Naive thymus-derived CD4-positive, alpha-beta T cell (primary cell): ENCODE measurements at regions of chr1 and their contacts with region 1.

Region 1: DNA sequence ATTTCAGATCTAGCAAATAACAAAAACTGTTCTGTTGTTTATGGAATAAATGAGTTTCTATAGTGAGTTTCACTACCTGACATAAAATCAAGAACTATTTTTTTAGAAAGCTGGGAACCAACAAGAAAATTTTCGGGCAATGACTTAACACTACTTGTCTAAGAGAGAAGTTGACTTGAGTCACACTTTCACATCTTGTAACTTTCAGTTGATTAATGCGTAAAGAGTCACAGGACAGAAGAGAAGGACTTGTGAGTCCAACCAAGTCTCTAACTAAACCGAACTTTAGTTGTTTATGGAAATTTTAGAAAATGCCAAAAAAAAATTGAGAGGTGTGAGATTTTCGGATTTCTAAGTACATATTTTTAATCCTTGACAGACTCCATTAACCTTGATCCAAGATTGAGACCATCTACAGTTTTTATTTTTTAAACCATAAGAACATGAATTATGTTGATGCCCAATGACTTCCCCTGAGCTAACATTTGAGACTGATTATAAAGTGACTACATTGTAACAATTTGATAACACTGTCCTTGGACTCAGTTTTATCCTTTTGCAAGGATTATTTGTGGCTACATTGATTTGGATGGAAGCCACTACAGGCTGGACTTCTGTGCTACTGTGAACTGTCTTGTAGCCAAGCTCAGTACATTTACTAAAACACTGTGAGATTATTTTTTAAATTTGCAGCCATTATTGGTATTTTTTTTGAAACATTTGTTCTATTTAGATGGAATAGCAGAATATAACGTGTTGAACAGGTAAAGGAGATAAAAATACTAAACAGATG is 284.0 kb downstream of the PTPRC start:
- DNase-seq: no peak
- ATAC-seq: peak; percentile 68
- H3K4me3 ChIP-seq: no peak overlapping the region
- H3K4me3 Mint-ChIP-seq: peak overlapping the region in 2 of 10 donors; percentile 18 to 68
- H3K27ac ChIP-seq: no peak overlapping the region
- H3K27ac Mint-ChIP-seq: peak overlapping the region in 4 of 9 donors; percentile 14 to 81 (median 60)
- H3K4me1 ChIP-seq: peaks cover 0 to 22% of the 10 kb centered on the region in 2 donors
- H3K4me1 Mint-ChIP-seq: peaks cover 30 to 90% (median 75%) of the 10 kb centered on the region in 7 donors
- H3K27me3 ChIP-seq: no peaks in the 10 kb centered on the region
- H3K27me3 Mint-ChIP-seq: no peaks in the 10 kb centered on the region

Region 2: GRCh38 chr1:198771563-198772153 is 151.2 kb before region 1 on chr1:
- CTCF ChIA-PET with region 1: no interaction called
- POLR2A ChIA-PET with region 1: no interaction called
- intact Hi-C with region 1: no loop called
- DNase-seq: no peak
- ATAC-seq: peak; percentile 40
- H3K4me3 ChIP-seq: no peak overlapping the region
- H3K4me3 Mint-ChIP-seq: no peak overlapping the region
- H3K27ac ChIP-seq: no peak overlapping the region
- H3K27ac Mint-ChIP-seq: no peak overlapping the region
- H3K4me1 ChIP-seq: no peaks in the 10 kb centered on the region
- H3K4me1 Mint-ChIP-seq: peaks cover 0 to 12% (median 3%) of the 10 kb centered on the region in 7 donors
- H3K27me3 ChIP-seq: no peaks in the 10 kb centered on the region
- H3K27me3 Mint-ChIP-seq: peaks cover 0 to 3% (median 0%) of the 10 kb centered on the region in 5 donors

Region 3: GRCh38 chr1:198903203-198903602 is 19.6 kb before region 1 on chr1:
- CTCF ChIA-PET with region 1: interaction called, 4 read pairs
- POLR2A ChIA-PET with region 1: no interaction called
- intact Hi-C with region 1: loop called (anchors 1 to 2 kb)
- DNase-seq: no peak
- ATAC-seq: no peak
- H3K4me3 ChIP-seq: no peak overlapping the region
- H3K4me3 Mint-ChIP-seq: no peak overlapping the region
- H3K27ac ChIP-seq: no peak overlapping the region
- H3K27ac Mint-ChIP-seq: peak overlapping the region in 1 of 9 donors; percentile 12
- H3K4me1 ChIP-seq: peaks cover 0 to 12% of the 10 kb centered on the region in 2 donors
- H3K4me1 Mint-ChIP-seq: peaks cover 9 to 59% (median 24%) of the 10 kb centered on the region in 7 donors
- H3K27me3 ChIP-seq: no peaks in the 10 kb centered on the region
- H3K27me3 Mint-ChIP-seq: no peaks in the 10 kb centered on the region

Region 4: DNA sequence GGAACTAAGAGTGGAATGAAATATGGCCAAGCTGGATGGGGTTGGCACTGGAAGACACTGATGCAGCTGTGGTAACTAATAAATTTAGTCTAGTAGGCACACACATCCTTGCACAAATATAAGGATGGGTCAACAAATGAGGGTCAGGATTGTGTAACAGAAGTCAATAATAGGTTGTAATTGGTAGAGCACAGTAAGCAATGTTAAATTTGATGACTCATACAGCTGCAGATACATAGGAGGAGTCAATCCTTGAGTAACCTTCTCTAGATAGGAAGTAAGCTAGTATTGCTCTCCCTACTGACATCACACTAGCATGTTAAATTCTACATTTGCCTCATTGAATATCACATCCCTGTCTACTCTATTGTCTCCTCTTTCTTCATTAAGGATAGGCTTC is 48.1 kb after region 1 on chr1:
- CTCF ChIA-PET with region 1: no interaction called
- POLR2A ChIA-PET with region 1: no interaction called
- intact Hi-C with region 1: loop called in 1 of 2 experiments (anchors 10 kb)
- DNase-seq: no peak
- ATAC-seq: peak; percentile 79
- H3K4me3 ChIP-seq: no peak overlapping the region
- H3K4me3 Mint-ChIP-seq: no peak overlapping the region
- H3K27ac ChIP-seq: no peak overlapping the region
- H3K27ac Mint-ChIP-seq: no peak overlapping the region
- H3K4me1 ChIP-seq: peaks cover 0 to 3% of the 10 kb centered on the region in 2 donors
- H3K4me1 Mint-ChIP-seq: peaks cover 2 to 48% (median 34%) of the 10 kb centered on the region in 7 donors
- H3K27me3 ChIP-seq: no peaks in the 10 kb centered on the region
- H3K27me3 Mint-ChIP-seq: peaks cover 0 to 4% (median 0%) of the 10 kb centered on the region in 5 donors

Region 5: DNA sequence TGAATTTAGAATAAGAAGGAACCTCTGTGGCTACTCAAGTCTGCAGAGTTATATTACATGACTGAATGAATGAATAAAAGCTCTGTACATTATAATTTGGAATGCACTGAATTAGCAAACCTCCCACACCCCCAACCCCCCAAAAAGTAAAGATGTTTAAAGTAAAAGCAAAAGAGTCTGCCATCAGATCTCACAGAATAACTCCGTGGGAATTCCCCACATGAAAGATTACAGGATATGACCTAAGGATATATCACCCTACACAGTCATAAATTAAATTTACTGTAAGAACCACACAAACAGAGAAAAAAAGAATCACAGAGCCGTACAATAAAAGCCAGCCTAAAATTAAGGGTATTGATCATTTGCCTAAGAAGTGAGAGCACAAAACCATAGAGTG is 303.3 kb after region 1 on chr1:
- CTCF ChIA-PET with region 1: no interaction called
- POLR2A ChIA-PET with region 1: no interaction called
- intact Hi-C with region 1: loop called in 1 of 2 experiments (anchors 5 kb)
- DNase-seq: peak in 7 of 9 donors; percentile 10 to 66 (median 30)
- ATAC-seq: peak; percentile 91
- H3K4me3 ChIP-seq: no peak overlapping the region
- H3K4me3 Mint-ChIP-seq: peak overlapping the region in 8 of 10 donors; percentile 2 to 72 (median 36)
- H3K27ac ChIP-seq: no peak overlapping the region
- H3K27ac Mint-ChIP-seq: peak overlapping the region; percentile 5 to 91 (median 56)
- H3K4me1 ChIP-seq: peaks cover 0 to 6% of the 10 kb centered on the region in 2 donors
- H3K4me1 Mint-ChIP-seq: peaks cover 9 to 23% (median 14%) of the 10 kb centered on the region in 7 donors
- H3K27me3 ChIP-seq: no peaks in the 10 kb centered on the region
- H3K27me3 Mint-ChIP-seq: no peaks in the 10 kb centered on the region